Panc1 (cell line): ENCODE measurements at regions of chr7 and their contacts with region 1.

Region 1: DNA sequence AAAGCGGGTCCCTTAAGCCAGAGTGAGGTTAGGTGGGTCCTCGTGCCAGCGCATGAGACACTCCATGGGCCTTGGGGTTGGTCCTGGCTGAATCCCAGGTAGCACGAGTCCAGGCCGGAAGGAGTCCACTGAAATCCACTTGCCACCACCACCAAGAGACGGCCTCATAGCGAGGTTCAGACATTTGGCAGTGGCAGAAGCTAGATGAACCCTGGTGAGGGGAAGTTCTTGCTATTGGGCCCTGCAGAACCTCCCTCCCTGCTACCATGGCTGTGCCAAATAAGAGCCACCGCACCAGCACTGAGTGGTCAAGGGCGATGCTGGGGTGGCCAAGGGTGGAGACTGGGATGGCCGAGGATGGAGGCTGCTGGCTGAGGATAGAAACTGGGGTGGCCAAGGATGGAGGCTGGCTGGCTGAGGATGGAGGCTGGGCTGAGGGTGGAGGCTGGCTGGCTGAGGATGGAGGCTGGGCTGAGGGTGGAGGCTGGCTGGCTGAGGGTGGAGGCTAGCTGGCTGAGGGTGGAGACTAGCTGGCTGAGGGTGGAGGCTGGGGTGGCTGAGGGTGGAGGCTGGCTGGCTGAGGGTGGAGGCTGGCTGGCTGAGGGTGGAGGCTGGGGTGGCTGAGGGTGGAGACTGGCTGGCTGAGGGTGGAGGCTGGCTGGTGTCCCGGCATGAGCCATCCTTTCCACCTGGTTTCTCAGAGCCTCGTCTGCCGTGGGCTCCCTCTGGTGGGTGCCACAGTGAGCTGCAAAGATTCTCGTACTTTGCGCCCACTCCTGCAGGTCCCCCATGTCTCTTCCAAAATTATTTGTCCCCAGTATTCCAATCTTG is 88.2 kb downstream of the ELFN1 start:
- DNase-seq: no peak
- ATAC-seq: peak; percentile 79
- H3K4me3 ChIP-seq: no peak overlapping the region
- H3K27ac ChIP-seq: no peak overlapping the region
- H3K4me1 ChIP-seq: no peaks in the 10 kb centered on the region; the same call in 1 of the 2 replicates
- H3K27me3 ChIP-seq: 0 out of 2 replicates have a peak, but pooled peaks cover 5% of the 10 kb centered on the region
- CTCF ChIP-seq: no peak; the same call in 1 of the 2 replicates

Region 2: GRCh38 chr7:1579481-1580421 is 178.5 kb before region 1 on chr7:
- CTCF ChIA-PET with region 1: interaction called, 5 read pairs
- POLR2A ChIA-PET with region 1: no interaction called
- in situ Hi-C with region 1: no loop called
- intact Hi-C with region 1: loop called (anchors 10 kb)
- DNase-seq: no peak
- ATAC-seq: peak; percentile 98
- H3K4me3 ChIP-seq: no peak overlapping the region
- H3K27ac ChIP-seq: no peak overlapping the region
- H3K4me1 ChIP-seq: no peaks in the 10 kb centered on the region
- H3K27me3 ChIP-seq: no peaks in the 10 kb centered on the region
- CTCF ChIP-seq: peak; percentile 97

Region 3: GRCh38 chr7:1664711-1665548 is 93.3 kb before region 1 on chr7:
- CTCF ChIA-PET with region 1: no interaction called
- POLR2A ChIA-PET with region 1: no interaction called
- in situ Hi-C with region 1: no loop called
- intact Hi-C with region 1: loop called (anchors 10 kb)
- DNase-seq: no peak
- ATAC-seq: 0 out of 2 replicates have a peak, but pooled peaks have one; percentile 9
- H3K4me3 ChIP-seq: peak overlapping the region; percentile 60 to 62
- H3K27ac ChIP-seq: peak overlapping the region; percentile 66
- H3K4me1 ChIP-seq: peaks cover 23% of the 10 kb centered on the region
- H3K27me3 ChIP-seq: no peaks in the 10 kb centered on the region
- CTCF ChIP-seq: peak; percentile 99

Region 4: DNA sequence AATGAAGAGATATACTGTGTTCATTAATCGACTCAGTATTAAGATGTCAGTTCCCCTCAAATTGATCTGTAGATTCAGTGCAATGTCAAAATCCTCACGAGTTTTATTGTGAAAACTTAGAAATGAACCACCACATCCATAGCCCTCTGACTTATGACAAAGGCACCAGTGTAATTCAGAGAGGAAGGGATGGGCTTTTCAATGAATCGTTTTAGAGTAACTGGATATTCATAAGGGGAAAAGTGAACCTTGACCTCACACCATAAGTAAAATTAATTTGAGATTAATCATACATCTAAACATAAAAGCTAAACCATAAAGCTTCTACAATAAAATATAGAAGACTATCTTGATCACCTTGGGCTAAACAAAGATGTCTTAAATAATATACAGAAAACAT is 39.9 kb after region 1 on chr7:
- CTCF ChIA-PET with region 1: interaction called, 10 read pairs
- POLR2A ChIA-PET with region 1: no interaction called
- in situ Hi-C with region 1: no loop called
- intact Hi-C with region 1: no loop called
- DNase-seq: no peak
- ATAC-seq: no peak
- H3K4me3 ChIP-seq: no peak overlapping the region
- H3K27ac ChIP-seq: no peak overlapping the region
- H3K4me1 ChIP-seq: no peaks in the 10 kb centered on the region
- H3K27me3 ChIP-seq: peaks cover 13% of the 10 kb centered on the region; the same call in 1 of the 2 replicates
- CTCF ChIP-seq: no peak

Region 5: GRCh38 chr7:2281541-2281940 is 523.3 kb after region 1 on chr7:
- CTCF ChIA-PET with region 1: no interaction called
- POLR2A ChIA-PET with region 1: no interaction called
- in situ Hi-C with region 1: no loop called
- intact Hi-C with region 1: no loop called
- DNase-seq: no peak
- ATAC-seq: no peak
- H3K4me3 ChIP-seq: no peak overlapping the region
- H3K27ac ChIP-seq: no peak overlapping the region
- H3K4me1 ChIP-seq: no peaks in the 10 kb centered on the region
- H3K27me3 ChIP-seq: no peaks in the 10 kb centered on the region
- CTCF ChIP-seq: no peak